HCT116 (cell line): ENCODE measurements at regions of chr5 and their contacts with region 1.

Region 1: DNA sequence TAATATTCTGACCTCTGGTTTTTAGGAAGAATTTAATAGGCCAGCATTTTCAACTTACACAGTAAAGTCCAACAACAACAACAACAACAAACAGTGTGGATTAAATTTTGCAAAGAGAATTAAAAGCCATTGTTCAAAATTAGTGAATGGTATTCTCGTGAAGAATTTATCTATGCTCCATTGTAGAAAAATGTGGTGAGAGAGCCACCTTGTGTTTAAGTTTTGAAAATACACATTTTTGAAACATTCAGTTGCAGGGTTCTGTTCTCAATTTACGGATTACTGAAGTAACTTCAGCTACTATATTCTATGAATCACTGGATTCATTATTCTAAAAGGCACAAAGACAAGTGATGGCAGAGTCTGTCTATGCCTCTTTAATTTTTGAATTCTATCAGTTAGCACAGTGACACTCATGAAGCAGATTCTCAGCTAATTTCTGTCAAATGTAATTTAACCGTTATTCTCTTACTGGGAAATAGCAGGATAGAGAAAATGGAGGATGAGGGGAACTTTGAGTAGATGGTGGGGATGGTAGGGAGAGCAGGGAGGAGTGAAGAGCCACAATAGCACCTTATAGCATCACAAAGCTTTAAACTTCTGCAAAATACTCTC is 11.0 kb downstream of the CCDC152 start:
- DNase-seq: no peak
- ATAC-seq: 0 out of 2 replicates have a peak, but pooled peaks have one; percentile 57
- H3K4me3 ChIP-seq: no peak overlapping the region
- H3K27ac ChIP-seq: no peak overlapping the region
- H3K4me1 ChIP-seq: no peaks in the 10 kb centered on the region
- H3K27me3 ChIP-seq: no peaks in the 10 kb centered on the region
- CTCF ChIP-seq: peak; percentile 29 to 65 (median 45); a peak in 4 of 6 replicates
- POLR2A ChIP-seq: no peak
- RAD21 ChIP-seq: peak; percentile 66

Region 2: DNA sequence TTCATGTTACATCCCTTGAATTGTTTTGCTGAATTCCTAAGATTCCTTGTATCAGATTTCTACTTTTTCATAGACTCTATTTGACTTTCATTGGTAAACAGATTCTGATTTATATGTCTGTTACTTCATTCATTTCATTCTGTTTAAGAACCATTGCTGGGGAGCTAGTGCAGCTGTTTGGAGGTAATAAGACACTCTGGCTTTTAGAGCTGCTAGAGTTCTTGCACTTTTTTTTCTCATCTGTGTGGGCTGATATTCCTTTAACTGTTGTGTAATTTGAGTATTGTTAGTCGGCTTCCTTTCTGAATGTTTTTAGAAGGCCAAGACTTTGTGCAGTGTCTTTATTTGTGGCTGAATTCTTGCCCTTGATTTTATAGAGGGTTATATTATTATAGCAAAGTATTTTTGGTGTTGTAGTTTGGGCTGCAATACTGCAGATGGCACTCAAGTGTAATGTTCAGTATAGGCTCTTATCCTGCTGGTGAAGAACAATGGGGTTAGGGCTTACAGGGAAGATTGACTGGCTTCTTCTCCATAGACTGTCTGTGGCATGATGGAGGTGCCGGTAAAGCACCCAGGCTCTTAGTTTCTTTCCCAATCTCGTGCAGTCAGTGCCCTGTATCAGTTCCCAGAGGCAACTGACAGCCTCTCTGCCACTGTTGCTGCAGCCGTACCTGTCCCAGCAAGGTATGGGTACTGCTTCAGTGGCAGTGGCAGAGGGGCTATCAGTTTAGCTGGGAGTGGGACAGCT is 1059.6 kb before region 1 on chr5:
- CTCF ChIA-PET with region 1: no interaction called
- POLR2A ChIA-PET with region 1: no interaction called
- RAD21 ChIA-PET with region 1: no interaction called
- intact Hi-C with region 1: loop called (anchors 10 kb)
- DNase-seq: peak; percentile 21
- ATAC-seq: peak; percentile 94
- H3K4me3 ChIP-seq: no peak overlapping the region
- H3K27ac ChIP-seq: no peak overlapping the region
- H3K4me1 ChIP-seq: no peaks in the 10 kb centered on the region
- H3K27me3 ChIP-seq: peaks cover 5% of the 10 kb centered on the region; the same call in 1 of the 2 replicates
- CTCF ChIP-seq: peak; percentile 39 to 64 (median 59); a peak in 5 of 6 replicates
- POLR2A ChIP-seq: no peak
- RAD21 ChIP-seq: peak; percentile 75

Region 3: DNA sequence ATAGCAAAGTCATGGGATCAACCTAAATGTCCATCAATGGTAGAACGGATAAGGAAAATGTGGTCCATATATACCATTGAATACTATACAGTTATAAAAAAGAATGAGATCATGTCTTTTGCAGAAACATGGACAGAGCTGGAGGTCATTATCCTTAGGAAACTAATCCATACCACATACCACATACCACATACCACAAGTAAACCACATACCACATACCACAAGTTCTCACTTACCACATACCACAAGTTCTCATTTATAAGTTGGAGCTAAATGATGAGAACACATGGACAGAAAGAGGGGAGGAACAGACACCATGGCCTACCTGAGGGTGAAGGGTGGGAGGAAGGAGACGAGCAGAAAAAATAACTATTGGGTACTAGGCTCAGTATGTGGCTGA is 499.0 kb before region 1 on chr5:
- CTCF ChIA-PET with region 1: no interaction called
- POLR2A ChIA-PET with region 1: no interaction called
- RAD21 ChIA-PET with region 1: no interaction called
- intact Hi-C with region 1: no loop called
- DNase-seq: no peak
- ATAC-seq: no peak
- H3K4me3 ChIP-seq: no peak overlapping the region
- H3K27ac ChIP-seq: no peak overlapping the region
- H3K4me1 ChIP-seq: no peaks in the 10 kb centered on the region
- H3K27me3 ChIP-seq: no peaks in the 10 kb centered on the region
- CTCF ChIP-seq: no peak
- POLR2A ChIP-seq: no peak
- RAD21 ChIP-seq: no peak

Region 4: DNA sequence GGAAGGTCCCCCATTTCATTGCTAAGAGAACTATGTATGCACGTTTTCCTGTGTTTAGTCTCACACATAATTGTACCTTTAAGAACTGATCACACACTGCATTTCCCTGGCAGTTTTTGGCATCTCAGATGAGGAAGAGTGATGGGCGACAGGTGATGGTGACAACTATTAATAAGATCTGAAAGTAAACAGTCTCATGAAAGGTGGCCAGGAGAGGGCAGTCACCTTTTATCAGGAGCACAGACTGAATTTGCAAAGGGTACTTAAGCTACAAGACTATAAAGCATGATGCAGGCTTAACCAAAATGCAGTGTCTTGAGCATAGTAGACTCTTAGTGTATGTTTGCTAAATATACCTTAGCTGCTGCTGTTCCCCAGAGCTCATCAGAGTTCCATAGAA is 252.8 kb before region 1 on chr5:
- CTCF ChIA-PET with region 1: interaction called, 12 read pairs
- POLR2A ChIA-PET with region 1: no interaction called
- RAD21 ChIA-PET with region 1: no interaction called
- intact Hi-C with region 1: no loop called
- DNase-seq: no peak
- ATAC-seq: peak; percentile 55; the same call in 1 of the 2 replicates
- H3K4me3 ChIP-seq: no peak overlapping the region
- H3K27ac ChIP-seq: no peak overlapping the region
- H3K4me1 ChIP-seq: no peaks in the 10 kb centered on the region
- H3K27me3 ChIP-seq: no peaks in the 10 kb centered on the region
- CTCF ChIP-seq: peak in 2 of 3 experiments; percentile 10 to 21; a peak in 2 of 6 replicates
- POLR2A ChIP-seq: no peak
- RAD21 ChIP-seq: no peak

Region 5: DNA sequence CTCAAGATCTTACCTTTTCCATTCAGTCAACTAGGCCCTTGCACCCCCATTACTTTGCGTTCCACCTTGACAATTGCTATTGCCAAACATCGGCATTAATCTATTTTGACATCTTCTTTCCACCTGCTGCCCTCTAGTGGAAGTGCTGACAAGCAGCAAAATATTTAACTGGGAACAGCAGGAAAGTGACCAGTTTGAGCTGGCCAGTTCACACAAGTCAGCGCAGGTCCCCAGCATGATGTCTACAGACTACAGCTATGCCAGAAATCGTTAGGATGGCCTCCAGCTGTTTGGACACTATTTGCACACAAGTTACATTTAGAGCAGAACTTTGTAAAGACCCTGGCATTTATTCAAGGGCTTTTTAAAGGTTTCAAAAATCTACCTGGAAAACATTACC is 184.3 kb before region 1 on chr5:
- CTCF ChIA-PET with region 1: interaction called, 6 read pairs
- POLR2A ChIA-PET with region 1: no interaction called
- RAD21 ChIA-PET with region 1: no interaction called
- intact Hi-C with region 1: loop called (anchors 5 kb)
- DNase-seq: peak; percentile 37
- ATAC-seq: peak; percentile 80
- H3K4me3 ChIP-seq: no peak overlapping the region
- H3K27ac ChIP-seq: no peak overlapping the region
- H3K4me1 ChIP-seq: no peaks in the 10 kb centered on the region
- H3K27me3 ChIP-seq: peaks cover 17% of the 10 kb centered on the region; the same call in 1 of the 2 replicates
- CTCF ChIP-seq: peak; percentile 40 to 88 (median 79); a peak in 5 of 6 replicates
- POLR2A ChIP-seq: no peak
- RAD21 ChIP-seq: peak; percentile 63

Region 6: DNA sequence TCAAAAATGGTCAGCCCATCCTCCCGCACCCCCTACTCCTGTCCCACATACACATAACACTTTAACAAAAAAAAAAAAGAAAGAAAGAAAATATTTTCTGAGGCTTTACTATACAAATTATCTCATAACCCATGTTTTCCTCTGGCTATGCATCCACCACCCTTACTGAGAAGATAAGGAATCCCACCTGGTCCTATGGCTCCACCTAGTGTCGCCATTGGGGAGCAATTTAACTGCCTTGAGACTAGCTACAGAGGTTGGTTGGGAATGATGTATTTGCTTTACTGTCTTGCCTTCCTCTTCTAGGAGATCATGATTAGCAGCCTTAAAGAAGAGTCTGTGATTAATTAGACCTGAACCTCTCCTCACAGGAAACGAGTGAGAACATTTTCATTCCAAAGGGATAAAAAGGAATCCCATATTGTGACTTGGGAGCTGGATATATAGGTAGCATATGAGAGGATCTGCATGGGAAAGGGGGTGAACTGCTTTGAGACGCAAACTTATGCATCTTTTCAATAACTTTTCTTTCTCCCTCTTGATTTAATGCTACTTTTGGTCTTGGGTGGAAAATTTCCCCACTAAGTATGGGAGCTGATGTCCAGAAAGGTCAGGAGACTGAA is 121.8 kb after region 1 on chr5:
- CTCF ChIA-PET with region 1: interaction called, 12 read pairs
- POLR2A ChIA-PET with region 1: no interaction called
- RAD21 ChIA-PET with region 1: interaction called in 1 of 2 experiments, 3 read pairs
- intact Hi-C with region 1: loop called (anchors 5 kb)
- DNase-seq: peak; percentile 66
- ATAC-seq: peak; percentile 94
- H3K4me3 ChIP-seq: no peak overlapping the region
- H3K27ac ChIP-seq: no peak overlapping the region
- H3K4me1 ChIP-seq: peaks cover 0 to 4% of the 10 kb centered on the region in 2 experiments; a peak in 2 of 4 replicates
- H3K27me3 ChIP-seq: peaks cover 5% of the 10 kb centered on the region
- CTCF ChIP-seq: peak; percentile 52 to 93 (median 86); a peak in 5 of 6 replicates
- POLR2A ChIP-seq: no peak
- RAD21 ChIP-seq: peak; percentile 85